T-cell (primary cell): ENCODE measurements at regions of chr12 and their contacts with region 1.

Region 1: DNA sequence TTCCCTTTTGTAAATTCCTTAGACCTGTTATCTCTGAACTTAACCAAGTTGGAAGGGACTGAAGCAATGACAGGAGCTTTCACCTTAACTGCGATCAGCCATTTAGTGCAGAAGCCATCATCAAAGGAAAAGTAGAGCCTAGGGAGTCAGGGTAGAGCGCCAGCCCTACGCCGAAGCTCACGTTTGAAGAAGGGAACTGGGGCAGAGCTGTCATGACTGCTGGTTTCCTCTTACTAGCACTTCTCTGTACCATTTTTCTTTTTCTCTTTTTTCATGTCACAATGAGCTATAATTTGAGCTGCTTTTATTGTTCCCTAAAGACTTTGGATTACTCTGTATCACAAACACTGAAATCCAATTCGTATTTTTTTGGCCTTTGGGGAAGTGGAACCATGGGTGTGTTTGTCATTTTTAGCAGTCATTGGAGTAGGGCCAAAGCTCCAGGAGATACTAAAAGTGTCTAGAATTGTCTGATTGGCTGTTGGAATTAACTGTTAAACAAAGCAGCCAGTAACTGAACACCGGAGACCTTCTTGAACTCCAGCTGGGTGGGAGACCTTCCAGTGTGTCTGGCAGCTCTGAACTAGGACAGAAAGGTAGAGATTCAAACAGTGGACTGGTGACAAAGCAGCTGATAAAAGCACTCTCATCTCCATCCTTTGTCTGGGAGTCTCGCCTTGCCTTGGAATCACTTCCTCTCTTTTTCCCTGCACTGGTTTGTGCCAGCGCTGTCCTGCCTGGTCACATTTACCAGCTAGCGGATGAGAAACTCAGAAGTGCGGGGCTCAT is 9.1 kb downstream of the MTRFR start:
- DNase-seq: peak in 9 of 35 experiments; percentile 16 to 47 (median 22)
- ATAC-seq: peak; percentile 67 to 81 (median 73)
- H3K4me3 ChIP-seq: no peak overlapping the region
- H3K4me3 Mint-ChIP-seq: peak overlapping the region in 2 of 3 donors; percentile 29 to 40
- H3K27ac ChIP-seq: peak overlapping the region; percentile 0
- H3K27ac Mint-ChIP-seq: peak overlapping the region; percentile 84 to 85
- H3K4me1 ChIP-seq: peaks cover 16 to 43% of the 10 kb centered on the region in 2 experiments
- H3K4me1 Mint-ChIP-seq: peaks cover 66 to 71% (median 67%) of the 10 kb centered on the region in 3 donors
- H3K27me3 ChIP-seq: no peaks in the 10 kb centered on the region
- H3K27me3 Mint-ChIP-seq: no peaks in the 10 kb centered on the region

Region 2: DNA sequence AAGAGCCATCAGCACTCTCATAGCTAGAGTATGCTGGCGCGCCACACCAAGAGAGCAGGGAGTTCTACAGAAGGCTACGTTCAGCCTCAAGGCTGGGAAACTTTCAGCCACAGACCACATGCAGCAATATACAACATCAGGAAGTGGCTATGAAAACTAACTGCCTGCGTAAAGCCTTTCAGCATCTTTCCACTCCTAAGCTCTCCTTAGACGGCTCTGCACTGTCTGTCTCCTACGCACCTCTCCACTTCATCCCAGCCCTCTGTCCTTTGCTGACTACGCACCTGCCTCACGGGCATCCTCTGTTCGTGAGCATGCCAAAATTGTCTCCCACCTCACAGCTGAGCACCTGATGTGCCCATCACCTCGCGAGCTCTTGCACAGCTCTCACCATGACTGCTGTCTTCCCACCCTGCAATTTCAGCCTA is 19.1 kb before region 1 on chr12:
- CTCF ChIA-PET with region 1: interaction called, 11 to 24 read pairs
- POLR2A ChIA-PET with region 1: interaction called in 1 of 2 experiments, 6 read pairs
- DNase-seq: peak; percentile 28 to 85 (median 50)
- ATAC-seq: peak; percentile 94 to 98 (median 97)
- H3K4me3 ChIP-seq: peak overlapping the region in 1 of 2 donors; percentile 34
- H3K4me3 Mint-ChIP-seq: peak overlapping the region; percentile 59 to 69 (median 67)
- H3K27ac ChIP-seq: peak overlapping the region; percentile 75
- H3K27ac Mint-ChIP-seq: peak overlapping the region; percentile 94 to 99
- H3K4me1 ChIP-seq: peaks cover 16 to 34% of the 10 kb centered on the region in 2 experiments
- H3K4me1 Mint-ChIP-seq: peaks cover 34 to 49% (median 38%) of the 10 kb centered on the region in 3 donors
- H3K27me3 ChIP-seq: no peaks in the 10 kb centered on the region
- H3K27me3 Mint-ChIP-seq: no peaks in the 10 kb centered on the region

Region 3: GRCh38 chr12:123286652-123287373 is 44.5 kb after region 1 on chr12:
- CTCF ChIA-PET with region 1: no interaction called
- POLR2A ChIA-PET with region 1: no interaction called
- DNase-seq: no peak
- ATAC-seq: no peak
- H3K4me3 ChIP-seq: no peak overlapping the region
- H3K4me3 Mint-ChIP-seq: no peak overlapping the region
- H3K27ac ChIP-seq: no peak overlapping the region
- H3K27ac Mint-ChIP-seq: no peak overlapping the region
- H3K4me1 ChIP-seq: no peaks in the 10 kb centered on the region
- H3K4me1 Mint-ChIP-seq: no peaks in the 10 kb centered on the region
- H3K27me3 ChIP-seq: peaks cover 0 to 2% of the 10 kb centered on the region in 2 experiments
- H3K27me3 Mint-ChIP-seq: no peaks in the 10 kb centered on the region